ENCODE measurements at regions of chr4 and their contacts with region 1.

Region 1: DNA sequence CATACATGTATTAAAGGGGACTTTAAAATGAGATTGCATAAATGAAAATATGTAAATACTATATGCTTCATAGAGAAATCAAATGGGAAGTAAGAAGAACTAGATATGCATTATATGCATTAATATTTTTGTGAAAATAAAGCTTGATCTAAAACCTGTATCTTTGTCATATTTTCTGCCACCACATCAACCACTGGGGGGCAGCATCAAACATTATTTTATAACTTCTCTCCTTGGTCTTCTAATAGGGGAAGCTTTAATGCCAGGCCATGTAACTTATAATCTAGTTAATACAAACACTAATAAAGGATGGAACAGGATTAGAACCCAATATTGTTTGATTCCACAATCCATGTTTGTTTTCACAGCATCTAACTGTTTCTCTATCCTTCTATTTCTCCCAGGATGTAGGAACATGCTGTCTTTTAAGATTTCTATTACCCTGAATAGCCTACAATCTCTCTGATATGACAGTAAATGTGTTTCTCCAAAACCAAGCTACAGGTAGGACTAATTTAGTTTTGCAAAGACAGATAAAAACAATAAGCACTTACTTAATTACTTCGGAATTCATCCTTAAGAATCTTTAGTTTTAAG is 10.0 kb downstream of the QRFPR start:
- DNase-seq: peak; percentile 28
- H3K4me3 ChIP-seq: no peak overlapping the region
- H3K27ac ChIP-seq: no peak overlapping the region
- H3K4me1 ChIP-seq: peaks cover 30% of the 10 kb centered on the region
- H3K27me3 ChIP-seq: no peaks in the 10 kb centered on the region
- CTCF ChIP-seq: peak; percentile 59 to 71

Region 2: DNA sequence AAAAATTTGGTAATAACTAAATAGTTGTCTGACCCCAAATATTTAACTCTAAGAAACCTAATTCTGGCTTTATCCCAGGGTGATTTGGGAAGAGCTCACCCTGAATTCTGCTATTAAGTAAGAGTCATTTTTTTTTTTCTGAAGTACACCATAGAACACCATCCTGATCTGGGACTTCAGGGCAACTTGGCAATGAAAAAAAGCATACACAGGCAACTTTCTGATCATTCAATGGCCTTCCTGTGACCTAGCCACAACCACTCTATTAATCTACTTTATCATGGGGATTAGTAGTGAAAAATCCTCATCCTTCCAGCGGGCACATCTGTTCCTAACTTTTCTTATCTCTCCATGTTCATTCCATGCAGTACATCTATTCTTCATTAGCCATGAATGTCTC is 971.0 kb before region 1 on chr4:
- CTCF ChIA-PET with region 1: no interaction called
- dilution Hi-C with region 1: no loop called
- in situ Hi-C with region 1: no loop called
- intact Hi-C with region 1: no loop called
- DNase-seq: no peak
- H3K4me3 ChIP-seq: no peak overlapping the region
- H3K27ac ChIP-seq: no peak overlapping the region
- H3K4me1 ChIP-seq: no peaks in the 10 kb centered on the region
- H3K27me3 ChIP-seq: no peaks in the 10 kb centered on the region
- CTCF ChIP-seq: no peak

Region 3: GRCh38 chr4:121277624-121278023 is 93.2 kb before region 1 on chr4:
- CTCF ChIA-PET with region 1: no interaction called
- dilution Hi-C with region 1: no loop called
- in situ Hi-C with region 1: no loop called
- intact Hi-C with region 1: loop called (anchors 1 kb)
- DNase-seq: peak; percentile 11
- H3K4me3 ChIP-seq: no peak overlapping the region
- H3K27ac ChIP-seq: no peak overlapping the region
- H3K4me1 ChIP-seq: no peaks in the 10 kb centered on the region
- H3K27me3 ChIP-seq: no peaks in the 10 kb centered on the region
- CTCF ChIP-seq: peak; percentile 16 to 45

Region 4: GRCh38 chr4:121421594-121421993 is 50.8 kb after region 1 on chr4:
- CTCF ChIA-PET with region 1: interaction called, 23 read pairs
- dilution Hi-C with region 1: no loop called
- in situ Hi-C with region 1: no loop called
- intact Hi-C with region 1: loop called (anchors 1 kb)
- DNase-seq: no peak
- H3K4me3 ChIP-seq: no peak overlapping the region
- H3K27ac ChIP-seq: no peak overlapping the region
- H3K4me1 ChIP-seq: no peaks in the 10 kb centered on the region
- H3K27me3 ChIP-seq: peaks cover 4% of the 10 kb centered on the region
- CTCF ChIP-seq: peak; percentile 58 to 59

Region 5: DNA sequence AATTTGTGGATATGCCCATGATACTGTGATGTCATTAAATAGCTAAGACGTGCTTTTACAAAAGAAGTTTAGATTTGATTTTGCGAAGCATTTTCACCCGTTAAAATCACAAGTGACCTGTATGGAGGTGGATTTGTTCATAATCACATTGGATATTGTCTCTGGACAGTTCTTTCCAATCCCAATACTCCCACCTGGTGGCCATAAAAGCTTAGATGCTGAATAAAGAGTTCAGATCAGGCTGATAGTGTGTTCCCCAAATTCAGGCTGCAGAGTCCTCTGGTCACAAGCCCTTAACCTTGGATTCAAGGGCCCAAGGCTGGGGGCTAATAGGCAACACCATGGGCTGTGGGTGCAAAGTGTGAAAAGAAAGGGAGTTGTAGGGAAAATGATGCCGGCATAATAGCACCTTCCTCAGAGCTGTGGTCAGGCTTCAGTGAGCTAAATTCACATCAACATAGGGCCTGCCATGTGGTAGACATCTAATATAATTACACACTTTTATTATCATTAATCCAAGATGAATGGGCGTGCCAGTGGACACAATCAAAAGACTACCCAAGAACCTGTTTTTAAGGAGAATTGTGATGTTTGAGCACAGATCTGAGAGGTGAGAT is 366.0 kb after region 1 on chr4:
- CTCF ChIA-PET with region 1: no interaction called
- dilution Hi-C with region 1: no loop called
- in situ Hi-C with region 1: no loop called
- intact Hi-C with region 1: loop called (anchors 5 kb)
- DNase-seq: peak; percentile 47
- H3K4me3 ChIP-seq: no peak overlapping the region
- H3K27ac ChIP-seq: no peak overlapping the region
- H3K4me1 ChIP-seq: no peaks in the 10 kb centered on the region
- H3K27me3 ChIP-seq: no peaks in the 10 kb centered on the region
- CTCF ChIP-seq: peak; percentile 59 to 67

Region 6: DNA sequence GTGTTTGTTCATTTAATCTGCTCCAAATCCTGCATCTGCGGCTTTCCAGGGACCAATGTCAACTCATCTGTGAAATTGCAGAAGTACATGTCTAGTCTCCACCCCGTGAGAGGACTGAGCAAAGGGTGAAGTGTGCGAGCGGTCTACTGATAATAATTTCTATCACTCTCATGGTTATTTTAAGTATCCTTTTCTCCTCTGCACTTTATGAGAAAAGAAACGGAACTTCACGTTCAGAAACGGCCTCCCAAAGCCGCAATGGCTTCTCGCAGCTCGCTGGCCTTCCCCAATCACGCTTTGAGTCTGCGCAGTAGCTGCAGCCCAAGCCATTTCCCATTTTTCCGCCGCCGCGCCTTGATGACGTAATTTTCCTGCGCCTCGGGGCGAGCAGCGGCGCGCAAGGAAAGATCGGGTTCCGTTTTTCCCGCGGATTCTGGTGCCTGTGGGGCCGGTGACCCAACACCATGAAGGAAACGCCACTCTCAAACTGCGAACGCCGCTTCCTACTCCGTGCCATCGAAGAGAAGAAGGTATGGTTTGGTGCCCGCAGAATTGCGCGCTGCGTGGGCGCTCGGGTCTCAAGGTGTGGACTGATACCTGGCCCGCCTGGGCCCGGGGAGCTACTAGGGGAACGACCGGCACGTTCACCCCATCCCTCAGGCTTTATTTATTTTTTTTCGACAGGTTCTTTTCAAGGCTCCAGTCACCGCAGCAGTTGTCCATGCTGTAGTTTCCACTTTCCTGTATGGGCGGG is 430.3 kb after region 1 on chr4 and contains the start of gene EXOSC9:
- CTCF ChIA-PET with region 1: no interaction called
- dilution Hi-C with region 1: no loop called
- in situ Hi-C with region 1: no loop called
- intact Hi-C with region 1: loop called (anchors 10 kb)
- DNase-seq: peak; percentile 91
- H3K4me3 ChIP-seq: peak within 1 kb of the TSS; percentile 73 to 97 (median 94)
- H3K27ac ChIP-seq: peak within 1 kb of the TSS; percentile 92
- H3K4me1 ChIP-seq: peaks cover 9% of the 10 kb centered on the region
- H3K27me3 ChIP-seq: no peaks in the 10 kb centered on the region
- CTCF ChIP-seq: no peak
- total RNA-seq, gene EXOSC9: 20.3 to 28.7 TPM